Cardiac septum (tissue), 1 donor: ENCODE measurements at regions of chr2 and their contacts with region 1.

Region 1: DNA sequence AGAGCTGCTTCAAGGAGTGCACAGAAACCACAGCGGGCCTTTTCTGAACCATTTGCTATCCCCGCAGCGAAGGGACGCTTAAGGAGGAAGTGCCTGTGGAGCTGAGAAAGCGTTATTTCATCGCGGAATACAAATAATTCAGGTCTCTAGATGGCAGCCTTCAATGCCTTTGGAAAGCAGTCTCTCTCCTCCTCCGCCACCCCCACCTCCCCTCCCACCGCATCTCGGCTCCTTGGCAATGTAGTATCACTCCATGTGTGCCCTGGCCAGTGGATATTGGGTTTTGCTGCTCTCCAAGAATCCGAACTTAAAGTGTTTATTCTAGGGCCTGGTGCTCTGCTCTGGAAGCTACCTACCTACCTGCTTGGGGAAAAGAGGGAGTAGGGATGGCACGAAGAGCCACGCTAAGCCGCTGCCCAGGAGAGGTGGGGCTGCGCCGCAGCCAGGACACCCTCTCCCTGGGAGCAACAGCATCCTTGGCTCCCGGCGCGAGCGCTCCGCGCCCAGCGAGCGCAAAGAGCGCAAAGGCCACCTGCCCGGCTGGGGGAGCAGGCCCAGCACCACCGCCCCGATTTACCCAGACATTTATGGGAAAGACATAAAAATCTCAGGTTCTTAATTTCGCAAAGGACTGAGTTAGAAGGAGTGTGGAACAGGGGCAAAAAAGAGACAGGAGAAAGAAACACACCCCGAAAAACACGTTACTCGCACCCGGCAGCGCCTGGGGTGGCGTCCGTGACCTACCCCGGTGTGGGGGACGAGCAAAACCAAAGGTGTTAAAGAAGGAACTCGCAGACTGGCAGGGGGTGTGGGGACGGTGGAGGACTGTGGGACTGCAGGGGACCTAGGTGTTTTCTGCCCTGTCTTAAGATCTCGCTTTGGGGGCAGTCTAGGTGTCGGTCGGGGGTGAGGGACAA is 1.0 kb downstream of the SPHKAP start:
- DNase-seq: no peak

Region 2: DNA sequence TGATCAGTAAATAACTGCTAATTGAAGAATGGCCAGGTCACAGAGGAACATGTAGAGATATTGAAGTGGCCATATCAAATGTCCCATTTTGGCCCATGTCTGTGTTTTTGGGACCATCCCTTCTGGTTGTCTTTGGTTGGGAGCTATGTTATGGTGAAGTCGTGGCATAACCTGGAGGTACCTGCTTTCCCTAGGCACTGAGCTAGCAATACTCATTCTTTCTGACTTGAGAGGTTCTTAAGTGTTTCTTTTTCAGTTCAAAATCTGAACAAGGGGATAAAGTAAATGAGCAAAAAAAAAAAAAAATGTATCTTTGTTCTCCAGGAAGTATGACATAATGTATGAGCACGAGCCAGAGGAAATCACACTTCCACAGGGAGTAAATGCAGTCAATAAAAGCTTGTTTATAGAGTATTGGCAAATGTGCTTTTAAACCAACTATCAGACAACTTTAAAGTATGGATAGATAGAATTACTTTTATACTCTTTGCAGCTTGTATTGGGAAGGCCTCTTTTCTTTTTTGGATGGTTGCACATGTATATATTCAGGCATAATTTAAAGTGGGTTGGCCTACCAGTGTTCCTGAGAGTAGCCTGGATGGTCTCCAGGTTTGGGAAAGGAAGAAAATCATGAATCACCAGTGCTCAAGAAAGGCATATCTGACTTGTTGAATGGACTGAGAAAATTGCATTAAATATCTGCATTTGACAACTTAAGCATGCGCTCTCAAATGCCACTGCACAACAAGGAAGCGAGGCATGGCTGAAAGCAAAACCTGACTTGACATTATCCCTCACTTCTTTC is 123.9 kb before region 1 on chr2:
- intact Hi-C with region 1: loop called (anchors 10 kb)
- DNase-seq: no peak

Region 3: GRCh38 chr2:228083131-228083530 is 97.3 kb before region 1 on chr2:
- intact Hi-C with region 1: no loop called
- DNase-seq: no peak

Region 4: GRCh38 chr2:228318218-228318617 is 137.8 kb after region 1 on chr2:
- intact Hi-C with region 1: loop called (anchors 2 kb)
- DNase-seq: no peak

Region 5: DNA sequence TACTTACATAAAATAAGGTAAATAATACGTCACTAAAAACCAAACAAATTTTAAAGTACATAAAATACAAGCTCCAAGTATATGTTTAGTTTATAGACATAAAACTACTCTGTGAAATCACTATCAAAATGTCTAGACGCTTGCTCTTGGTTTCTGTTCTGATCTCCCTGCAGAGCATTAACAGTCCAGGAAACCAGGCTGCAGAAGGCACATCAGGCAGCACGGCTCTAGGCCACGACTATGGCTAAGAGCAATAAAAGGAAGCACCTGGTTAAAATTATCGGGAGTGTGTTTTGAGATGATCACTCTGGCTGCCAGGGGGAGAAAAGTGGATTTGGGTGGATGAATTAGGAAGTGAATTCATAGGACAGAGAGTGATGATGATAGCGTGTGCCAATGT is 197.1 kb after region 1 on chr2:
- intact Hi-C with region 1: loop called (anchors 2 kb)
- DNase-seq: no peak

Region 6: GRCh38 chr2:228652366-228652765 is 471.9 kb after region 1 on chr2:
- intact Hi-C with region 1: loop called (anchors 2 kb)
- DNase-seq: no peak

Region 7: DNA sequence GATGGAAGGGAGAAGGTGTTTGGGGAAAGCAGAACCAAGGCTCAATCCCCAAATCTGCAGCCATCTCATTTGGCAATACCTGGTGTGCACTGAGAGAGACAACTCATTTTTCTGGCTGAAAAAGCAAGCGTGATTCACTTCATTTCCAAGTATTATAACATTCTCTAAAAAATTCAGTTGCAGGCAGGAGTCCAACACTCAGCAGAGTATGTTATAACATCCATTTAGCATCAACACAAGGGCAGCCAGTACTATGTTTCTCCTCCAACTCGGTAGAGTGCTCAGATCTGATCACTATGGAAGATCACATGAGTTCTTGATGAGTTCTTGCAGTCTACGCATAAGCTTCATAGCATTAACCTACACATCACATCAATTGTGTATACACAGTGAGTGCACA is 1190.1 kb after region 1 on chr2:
- intact Hi-C with region 1: no loop called
- DNase-seq: no peak